ENCODE measurements at regions of chr9 and their contacts with region 1.

Region 1: GRCh38 chr9:20684035-20684872 is at the start of gene FOCAD:
- DNase-seq: peak; percentile 97
- H3K4me3 Mint-ChIP-seq: peak within 1 kb of the TSS; percentile 83
- H3K27ac Mint-ChIP-seq: peak within 1 kb of the TSS; percentile 85
- H3K4me1 Mint-ChIP-seq: peaks cover 22% of the 10 kb centered on the region
- H3K27me3 Mint-ChIP-seq: no peaks in the 10 kb centered on the region
- total RNA-seq, gene FOCAD: 35.4 to 37.1 TPM

Region 2: GRCh38 chr9:20209391-20210340 is 474.6 kb before region 1 on chr9:
- CTCF ChIA-PET with region 1: no interaction called
- POLR2A ChIA-PET with region 1: interaction called, 5 read pairs
- intact Hi-C with region 1: loop called (anchors 1 kb)
- DNase-seq: peak; percentile 79
- H3K4me3 Mint-ChIP-seq: no peak overlapping the region
- H3K27ac Mint-ChIP-seq: peak overlapping the region; percentile 89
- H3K4me1 Mint-ChIP-seq: peaks cover 33% of the 10 kb centered on the region
- H3K27me3 Mint-ChIP-seq: no peaks in the 10 kb centered on the region

Region 3: GRCh38 chr9:20508242-20508641 is 176.0 kb before region 1 on chr9:
- CTCF ChIA-PET with region 1: no interaction called
- POLR2A ChIA-PET with region 1: no interaction called
- intact Hi-C with region 1: loop called (anchors 5 kb)
- DNase-seq: peak; percentile 18
- H3K4me3 Mint-ChIP-seq: no peak overlapping the region
- H3K27ac Mint-ChIP-seq: no peak overlapping the region
- H3K4me1 Mint-ChIP-seq: peaks cover 76% of the 10 kb centered on the region
- H3K27me3 Mint-ChIP-seq: no peaks in the 10 kb centered on the region

Region 4: GRCh38 chr9:20640331-20641187 is 43.7 kb before region 1 on chr9:
- CTCF ChIA-PET with region 1: interaction called, 3 read pairs
- POLR2A ChIA-PET with region 1: interaction called, 3 read pairs
- intact Hi-C with region 1: loop called (anchors 1 kb)
- DNase-seq: peak; percentile 81
- H3K4me3 Mint-ChIP-seq: peak overlapping the region; percentile 18
- H3K27ac Mint-ChIP-seq: peak overlapping the region; percentile 49
- H3K4me1 Mint-ChIP-seq: peaks cover 10% of the 10 kb centered on the region
- H3K27me3 Mint-ChIP-seq: peaks cover 3% of the 10 kb centered on the region

Region 5: GRCh38 chr9:20670395-20670794 is 13.9 kb before region 1 on chr9:
- CTCF ChIA-PET with region 1: no interaction called
- POLR2A ChIA-PET with region 1: no interaction called
- intact Hi-C with region 1: no loop called
- DNase-seq: no peak
- H3K4me3 Mint-ChIP-seq: no peak overlapping the region
- H3K27ac Mint-ChIP-seq: no peak overlapping the region
- H3K4me1 Mint-ChIP-seq: no peaks in the 10 kb centered on the region
- H3K27me3 Mint-ChIP-seq: no peaks in the 10 kb centered on the region

Region 6: GRCh38 chr9:20925256-20926045 is 241.2 kb after region 1 on chr9:
- CTCF ChIA-PET with region 1: no interaction called
- POLR2A ChIA-PET with region 1: no interaction called
- intact Hi-C with region 1: loop called (anchors 1 kb)
- DNase-seq: no peak
- H3K4me3 Mint-ChIP-seq: no peak overlapping the region
- H3K27ac Mint-ChIP-seq: no peak overlapping the region
- H3K4me1 Mint-ChIP-seq: peaks cover 24% of the 10 kb centered on the region
- H3K27me3 Mint-ChIP-seq: no peaks in the 10 kb centered on the region

Region 7: GRCh38 chr9:21031091-21031807 is 347.0 kb after region 1 on chr9 and contains the start of gene HACD4:
- CTCF ChIA-PET with region 1: interaction called, 3 read pairs
- POLR2A ChIA-PET with region 1: interaction called, 3 read pairs
- intact Hi-C with region 1: loop called (anchors 1 kb)
- DNase-seq: peak; percentile 77
- H3K4me3 Mint-ChIP-seq: peak within 1 kb of the TSS; percentile 60
- H3K27ac Mint-ChIP-seq: peak within 1 kb of the TSS; percentile 66
- H3K4me1 Mint-ChIP-seq: peaks cover 21% of the 10 kb centered on the region
- H3K27me3 Mint-ChIP-seq: no peaks in the 10 kb centered on the region
- total RNA-seq, gene HACD4: 1.9 to 2.4 TPM

Region 8: DNA sequence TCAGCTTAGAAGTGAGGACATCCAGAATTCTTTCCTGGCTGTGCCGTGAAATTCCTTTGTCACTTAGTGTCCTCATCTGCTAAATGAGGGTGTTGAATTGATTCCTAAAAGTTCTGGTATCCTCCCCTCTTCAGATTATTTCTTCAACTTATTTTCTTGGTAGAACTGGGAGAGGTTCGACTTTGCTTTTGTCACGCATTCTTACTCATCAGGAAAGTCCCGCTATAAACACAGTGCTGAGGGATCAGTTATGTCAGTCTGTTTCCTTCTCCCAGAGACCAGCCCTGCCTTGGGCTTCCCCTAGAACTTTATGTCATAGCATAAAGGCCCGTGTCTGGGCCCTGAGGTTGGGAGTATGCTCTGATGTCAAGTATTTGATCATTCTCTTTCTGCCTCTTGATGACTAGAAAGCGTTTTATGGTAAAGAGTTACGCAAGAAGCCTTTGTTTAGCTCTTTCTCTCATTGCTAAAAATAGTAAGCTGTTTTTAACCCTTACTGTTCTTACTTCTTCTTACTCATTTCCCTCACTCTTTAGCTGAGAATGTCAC is 1147.8 kb after region 1 on chr9:
- CTCF ChIA-PET with region 1: no interaction called
- POLR2A ChIA-PET with region 1: no interaction called
- intact Hi-C with region 1: loop called (anchors 10 kb)
- DNase-seq: peak; percentile 74
- H3K4me3 Mint-ChIP-seq: no peak overlapping the region
- H3K27ac Mint-ChIP-seq: peak overlapping the region; percentile 33
- H3K4me1 Mint-ChIP-seq: peaks cover 66% of the 10 kb centered on the region
- H3K27me3 Mint-ChIP-seq: no peaks in the 10 kb centered on the region

Measured in activated CD4-positive, alpha-beta memory T cell treated with anti-CD3 and anti-CD28 coated beads for 36 hours (primary cell).